ENCODE measurements at regions of chr7 and their contacts with region 1.

Region 1: GRCh38 chr7:120792091-120792860 is 65.7 kb downstream of the TSPAN12 start:
- DNase-seq: peak; percentile 59
- CTCF ChIP-seq: peak; percentile 97

Region 2: DNA sequence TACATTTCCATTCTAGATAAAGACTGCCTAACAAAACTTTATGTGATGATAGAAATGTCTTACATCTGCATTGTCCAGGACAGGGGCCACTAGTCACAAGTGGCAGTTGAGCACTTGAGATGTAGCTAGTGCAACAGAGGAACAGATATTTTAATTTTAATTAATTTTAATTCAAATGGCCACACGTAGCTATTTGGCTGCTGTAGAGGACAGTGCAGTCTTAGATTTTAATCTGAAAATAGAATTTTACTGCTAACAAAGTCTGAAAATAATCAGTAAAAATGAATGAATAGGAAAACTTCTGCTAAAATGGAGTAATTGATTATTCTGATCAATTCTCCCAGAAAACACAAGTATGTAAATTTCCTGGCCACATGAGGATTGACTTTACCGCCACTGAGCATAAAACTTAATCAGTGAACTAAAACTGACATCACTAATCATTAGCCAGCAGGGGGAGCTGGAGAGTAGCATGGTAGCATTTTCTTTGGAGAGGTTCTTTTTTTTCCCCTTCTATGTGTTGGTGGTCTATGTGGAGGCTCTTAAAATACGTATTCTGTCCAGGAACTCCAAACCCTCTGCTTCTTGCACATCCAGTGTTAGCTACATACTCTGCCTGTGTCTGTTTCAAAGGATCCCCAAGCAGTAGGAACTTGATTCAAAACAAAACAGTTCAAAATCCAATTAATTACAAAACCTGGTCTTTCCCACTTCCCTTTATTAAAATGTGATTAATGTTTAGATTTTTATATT is 13.5 kb after region 1 on chr7:
- CTCF ChIA-PET with region 1: interaction called, 155 read pairs
- POLR2A ChIA-PET with region 1: no interaction called
- DNase-seq: peak; percentile 53
- CTCF ChIP-seq: peak; percentile 74

Region 3: GRCh38 chr7:120857588-120858573 is 65.6 kb after region 1 on chr7 and contains the start of gene TSPAN12:
- CTCF ChIA-PET with region 1: interaction called, 14 read pairs
- POLR2A ChIA-PET with region 1: no interaction called
- DNase-seq: peak; percentile 86
- CTCF ChIP-seq: peak; percentile 79

Region 4: DNA sequence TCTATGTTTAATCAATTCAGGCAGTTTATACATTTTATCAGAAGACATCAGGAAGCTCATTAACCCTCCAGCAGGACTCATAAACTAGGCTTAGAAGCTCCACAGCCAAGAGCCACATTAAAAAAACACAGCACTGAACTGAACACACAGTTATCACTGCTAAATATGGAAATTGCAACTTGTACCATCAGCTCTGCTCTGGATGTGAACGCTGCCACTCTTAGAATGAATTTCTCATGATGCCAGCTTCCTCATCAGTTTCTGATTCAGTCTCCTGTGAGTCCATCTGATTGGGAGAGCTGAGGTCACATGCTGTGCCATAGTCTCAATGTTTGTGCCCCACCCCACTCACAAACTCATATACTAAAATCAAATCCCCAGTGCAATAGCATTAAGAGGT is 141.2 kb after region 1 on chr7:
- CTCF ChIA-PET with region 1: interaction called, 14 read pairs
- POLR2A ChIA-PET with region 1: no interaction called
- DNase-seq: no peak
- CTCF ChIP-seq: no peak

Region 5: GRCh38 chr7:120947980-120948379 is 155.7 kb after region 1 on chr7:
- CTCF ChIA-PET with region 1: interaction called, 11 read pairs
- POLR2A ChIA-PET with region 1: no interaction called
- DNase-seq: no peak
- CTCF ChIP-seq: no peak

Measured in GM10248 (cell line).